CD8-positive, alpha-beta memory T cell (primary cell): ENCODE measurements at regions of chr18 and their contacts with region 1.

Region 1: DNA sequence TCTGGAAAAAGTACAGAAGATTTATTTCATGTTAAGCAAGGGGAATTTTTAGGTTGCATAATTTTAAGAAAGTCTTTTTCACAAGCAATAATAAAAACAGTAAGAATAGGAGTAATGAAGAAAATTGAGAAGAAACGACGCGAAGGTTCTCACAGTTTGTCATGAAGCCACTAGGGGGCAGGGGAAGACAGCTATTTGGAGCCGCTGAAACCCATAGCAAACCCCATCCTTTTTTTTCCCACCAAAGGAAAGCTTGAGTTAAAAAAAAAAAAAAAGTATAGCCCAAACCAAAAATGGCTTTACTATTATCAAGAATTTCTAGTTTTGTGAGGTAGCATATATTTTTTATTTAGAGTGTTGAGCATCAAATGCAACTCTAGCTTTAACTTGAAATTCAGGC is 300.9 kb downstream of the PHLPP1 start:
- DNase-seq: peak in 4 of 5 donors; percentile 31 to 63 (median 50)
- H3K4me3 ChIP-seq: no peak overlapping the region
- H3K4me3 Mint-ChIP-seq: no peak overlapping the region
- H3K27ac ChIP-seq: no peak overlapping the region
- H3K27ac Mint-ChIP-seq: peak overlapping the region in 1 of 8 donors; percentile 39
- H3K4me1 ChIP-seq: no peaks in the 10 kb centered on the region
- H3K4me1 Mint-ChIP-seq: no peaks in the 10 kb centered on the region
- H3K27me3 ChIP-seq: peaks cover 4% of the 10 kb centered on the region
- H3K27me3 Mint-ChIP-seq: peaks cover 12 to 26% of the 10 kb centered on the region in 2 donors

Region 2: DNA sequence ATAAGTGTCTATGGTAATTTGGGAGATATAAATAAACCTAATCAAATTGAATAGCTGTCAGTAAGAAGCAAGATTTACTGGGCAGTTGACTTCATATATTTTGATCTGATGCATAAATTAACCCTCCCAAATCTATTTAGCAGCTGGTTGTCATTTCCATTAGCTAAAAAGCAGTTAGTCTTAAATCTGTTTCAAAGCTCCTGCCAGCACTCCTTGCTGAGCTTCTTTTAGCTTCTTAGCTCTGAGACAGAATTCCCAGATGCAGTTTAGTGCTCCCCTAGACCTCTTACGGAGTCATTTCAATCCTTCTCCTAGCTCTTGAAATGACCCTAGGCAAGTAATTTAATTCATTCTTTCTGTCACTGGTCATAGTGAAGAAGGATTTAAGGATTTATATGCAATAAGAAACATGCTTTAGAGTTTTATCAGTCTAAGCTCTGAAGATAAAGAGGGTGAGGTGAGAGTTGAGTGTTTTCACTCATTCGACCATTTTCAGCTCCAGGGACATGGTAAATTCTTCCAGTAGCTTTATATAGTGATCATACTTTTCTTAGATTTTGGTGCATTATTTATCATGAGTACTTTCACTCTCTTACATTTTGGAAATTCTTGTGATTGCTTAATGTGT is 202.0 kb before region 1 on chr18:
- CTCF ChIA-PET with region 1: no interaction called
- POLR2A ChIA-PET with region 1: no interaction called
- DNase-seq: no peak
- H3K4me3 ChIP-seq: no peak overlapping the region
- H3K4me3 Mint-ChIP-seq: no peak overlapping the region
- H3K27ac ChIP-seq: no peak overlapping the region
- H3K27ac Mint-ChIP-seq: no peak overlapping the region
- H3K4me1 ChIP-seq: no peaks in the 10 kb centered on the region
- H3K4me1 Mint-ChIP-seq: peaks cover 3 to 20% (median 7%) of the 10 kb centered on the region in 3 donors
- H3K27me3 ChIP-seq: no peaks in the 10 kb centered on the region
- H3K27me3 Mint-ChIP-seq: no peaks in the 10 kb centered on the region

Region 3: DNA sequence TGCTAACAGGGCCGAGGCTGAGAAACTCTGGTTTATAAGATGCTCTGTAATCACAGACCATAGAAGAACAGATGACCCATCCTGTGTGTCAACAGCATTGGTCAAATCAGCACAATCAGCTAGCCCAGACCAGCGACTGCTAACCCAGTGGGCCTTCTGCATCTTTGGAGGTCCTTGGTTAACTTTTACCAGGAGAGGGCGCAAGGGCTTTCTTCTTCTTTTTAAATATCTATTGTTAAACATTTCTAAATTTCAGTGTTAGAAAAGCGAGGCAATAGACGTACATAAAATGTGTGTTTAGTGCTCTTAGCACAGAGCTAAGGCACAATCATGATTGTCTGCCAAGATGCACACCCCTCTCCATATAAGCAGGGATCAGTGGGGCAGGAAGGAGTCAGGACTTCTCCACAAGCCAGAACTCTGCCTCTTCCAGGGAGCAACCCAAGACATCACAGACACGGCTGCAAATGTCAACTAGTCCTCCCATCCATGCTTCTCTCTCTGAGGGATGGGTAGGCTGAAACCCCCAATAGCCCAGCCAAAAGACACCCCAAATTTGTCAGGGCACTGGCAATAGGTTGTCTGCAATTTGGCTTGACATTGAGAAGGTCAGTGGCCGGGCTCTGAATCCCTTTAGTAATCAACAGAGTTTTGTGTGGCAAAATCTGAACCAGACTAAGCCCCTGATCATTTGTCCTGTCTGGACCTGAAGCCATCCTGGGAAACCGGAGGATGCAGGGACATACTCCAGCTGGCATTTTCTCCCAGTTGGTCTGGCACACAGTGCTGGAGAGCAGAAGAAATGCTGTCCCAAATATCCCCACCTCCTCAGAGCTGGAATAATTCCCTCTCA is 115.1 kb after region 1 on chr18:
- CTCF ChIA-PET with region 1: interaction called, 18 read pairs
- POLR2A ChIA-PET with region 1: no interaction called
- DNase-seq: peak; percentile 35 to 69 (median 52)
- H3K4me3 ChIP-seq: no peak overlapping the region
- H3K4me3 Mint-ChIP-seq: no peak overlapping the region
- H3K27ac ChIP-seq: no peak overlapping the region
- H3K27ac Mint-ChIP-seq: peak overlapping the region; percentile 53 to 93 (median 88)
- H3K4me1 ChIP-seq: peaks cover 25% of the 10 kb centered on the region
- H3K4me1 Mint-ChIP-seq: peaks cover 29 to 35% (median 34%) of the 10 kb centered on the region in 3 donors
- H3K27me3 ChIP-seq: no peaks in the 10 kb centered on the region
- H3K27me3 Mint-ChIP-seq: peaks cover 0 to 2% of the 10 kb centered on the region in 2 donors

Region 4: GRCh38 chr18:63192885-63193349 is 176.6 kb after region 1 on chr18:
- CTCF ChIA-PET with region 1: no interaction called
- POLR2A ChIA-PET with region 1: no interaction called
- DNase-seq: no peak
- H3K4me3 ChIP-seq: no peak overlapping the region
- H3K4me3 Mint-ChIP-seq: no peak overlapping the region
- H3K27ac ChIP-seq: no peak overlapping the region
- H3K27ac Mint-ChIP-seq: peak overlapping the region; percentile 14 to 74 (median 48)
- H3K4me1 ChIP-seq: peaks cover 16% of the 10 kb centered on the region
- H3K4me1 Mint-ChIP-seq: peaks cover 35 to 60% (median 54%) of the 10 kb centered on the region in 3 donors
- H3K27me3 ChIP-seq: no peaks in the 10 kb centered on the region
- H3K27me3 Mint-ChIP-seq: no peaks in the 10 kb centered on the region

Region 5: DNA sequence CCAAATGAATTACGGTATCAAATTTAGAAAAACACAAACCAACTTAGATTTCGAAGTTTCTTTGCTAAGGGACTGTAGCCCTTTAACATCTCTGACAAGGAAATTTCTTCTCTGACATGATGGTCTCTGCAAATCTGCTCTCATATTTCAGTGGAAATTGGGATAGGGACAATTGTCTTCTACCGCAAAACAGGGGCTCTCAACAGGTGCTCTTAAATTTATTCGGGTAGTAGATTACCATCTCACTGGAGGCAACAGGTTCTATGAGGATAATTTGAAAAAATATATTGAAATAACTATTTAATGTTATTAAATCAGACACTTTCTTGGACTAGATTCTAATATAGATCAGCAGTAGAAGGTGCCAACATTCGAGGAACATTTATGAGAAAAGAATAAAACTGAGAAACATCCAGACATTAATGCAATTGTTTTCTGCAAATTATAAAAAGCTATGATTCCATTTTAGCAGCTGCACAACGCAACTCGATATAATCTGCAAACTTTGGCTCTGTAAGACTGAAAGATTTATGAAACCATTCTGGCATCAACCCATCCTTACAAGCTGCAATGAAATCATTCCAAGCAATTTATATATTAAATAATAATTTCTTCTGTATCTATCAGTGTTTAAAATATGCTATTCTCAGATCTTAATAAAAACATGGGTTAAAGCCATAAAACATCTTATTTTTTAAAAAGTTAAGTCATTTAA is 313.3 kb after region 1 on chr18:
- CTCF ChIA-PET with region 1: interaction called, 17 read pairs
- POLR2A ChIA-PET with region 1: no interaction called
- DNase-seq: no peak
- H3K4me3 ChIP-seq: no peak overlapping the region
- H3K4me3 Mint-ChIP-seq: no peak overlapping the region
- H3K27ac ChIP-seq: no peak overlapping the region
- H3K27ac Mint-ChIP-seq: no peak overlapping the region
- H3K4me1 ChIP-seq: no peaks in the 10 kb centered on the region
- H3K4me1 Mint-ChIP-seq: no peaks in the 10 kb centered on the region
- H3K27me3 ChIP-seq: no peaks in the 10 kb centered on the region
- H3K27me3 Mint-ChIP-seq: no peaks in the 10 kb centered on the region

Region 6: DNA sequence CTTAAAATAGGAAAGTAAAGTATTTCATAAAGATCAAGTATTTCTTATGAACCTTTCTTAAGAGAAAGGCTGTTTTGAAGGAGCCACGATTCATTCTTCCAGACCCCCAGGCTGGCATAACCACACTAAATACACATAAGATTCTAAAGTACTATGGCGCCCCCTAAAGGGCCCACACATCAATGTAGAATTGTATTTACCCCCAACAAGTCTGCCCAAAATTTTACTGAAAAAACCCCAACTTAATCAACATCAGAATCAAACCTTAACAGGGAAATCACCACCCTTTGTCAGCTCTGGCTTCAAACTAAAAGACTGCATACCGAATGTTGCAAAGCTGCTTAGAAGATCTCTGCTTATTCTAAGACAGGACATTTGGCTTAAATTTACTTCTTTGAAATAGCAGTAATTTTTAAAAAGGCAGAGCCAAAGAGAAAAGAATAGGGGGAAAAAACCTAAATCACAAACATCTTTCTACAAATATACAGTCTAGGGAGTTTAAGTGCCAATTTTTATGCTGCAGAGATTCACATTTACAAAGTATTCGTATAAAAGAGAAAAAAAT is 323.7 kb after region 1 on chr18:
- CTCF ChIA-PET with region 1: interaction called, 19 read pairs
- POLR2A ChIA-PET with region 1: no interaction called
- DNase-seq: peak in 4 of 5 donors; percentile 25 to 54 (median 43)
- H3K4me3 ChIP-seq: no peak overlapping the region
- H3K4me3 Mint-ChIP-seq: no peak overlapping the region
- H3K27ac ChIP-seq: no peak overlapping the region
- H3K27ac Mint-ChIP-seq: peak overlapping the region in 3 of 8 donors; percentile 8 to 76 (median 25)
- H3K4me1 ChIP-seq: no peaks in the 10 kb centered on the region
- H3K4me1 Mint-ChIP-seq: peaks cover 6 to 7% (median 6%) of the 10 kb centered on the region in 3 donors
- H3K27me3 ChIP-seq: no peaks in the 10 kb centered on the region
- H3K27me3 Mint-ChIP-seq: no peaks in the 10 kb centered on the region